Natural killer cell (primary cell): ENCODE measurements at regions of chr11 and their contacts with region 1.

Region 1: DNA sequence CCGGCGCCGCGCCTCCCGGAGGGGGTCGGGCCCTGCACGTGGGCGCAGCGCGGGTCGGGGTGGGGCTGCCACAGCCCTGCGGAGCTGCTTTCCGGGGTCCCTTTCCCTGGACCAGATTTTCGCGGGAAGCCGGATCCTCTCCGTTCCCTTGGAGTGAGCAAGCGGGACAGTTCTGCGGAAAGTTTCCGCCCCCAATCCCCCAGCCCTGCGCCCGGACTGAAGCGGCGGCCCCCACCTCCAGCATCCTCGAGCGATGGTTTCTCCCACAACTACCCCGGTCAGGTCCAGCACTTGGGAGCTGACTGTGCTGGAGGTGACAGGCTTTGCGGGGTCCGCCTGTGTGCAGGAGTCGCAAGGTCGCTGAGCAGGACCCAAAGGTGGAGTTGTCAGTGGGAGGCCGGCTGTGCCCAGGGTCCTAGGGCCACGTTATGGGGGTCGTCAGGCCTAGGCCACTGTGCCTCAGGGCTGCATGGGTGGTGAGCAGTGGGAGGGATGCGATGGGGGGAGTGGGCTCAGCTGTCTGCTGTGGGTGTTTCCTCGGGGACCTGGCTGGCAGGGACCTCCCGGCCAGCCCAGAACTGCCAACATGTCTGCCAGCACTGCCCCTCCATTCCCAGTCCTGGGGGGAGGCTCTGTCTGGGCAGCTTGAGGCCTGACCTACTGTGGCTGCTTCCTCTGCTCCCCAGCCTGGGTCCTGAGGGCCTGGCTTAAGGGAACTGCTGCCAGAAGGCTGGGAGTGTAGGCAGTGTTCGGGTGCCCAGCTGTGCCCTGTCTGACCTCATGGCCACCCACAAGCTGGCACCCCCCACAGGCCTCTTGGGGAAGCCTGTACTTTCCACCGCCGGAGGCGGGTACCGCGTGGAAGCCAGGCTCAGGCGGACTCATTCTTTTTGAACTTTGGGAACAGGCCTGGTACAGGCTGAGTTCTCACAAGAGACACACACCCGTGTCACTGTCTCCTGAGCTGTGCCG is 726 bp downstream of the ST3GAL4 start:
- DNase-seq: peak in 1 of 2 donors; percentile 37
- ATAC-seq: peak; percentile 11 to 36 (median 33)
- H3K4me3 ChIP-seq: peak overlapping the region; percentile 35
- H3K4me3 Mint-ChIP-seq: peak overlapping the region; percentile 79
- H3K27ac ChIP-seq: peak overlapping the region; percentile 37
- H3K27ac Mint-ChIP-seq: peak overlapping the region; percentile 67 to 80
- H3K4me1 ChIP-seq: peaks cover 58% of the 10 kb centered on the region
- H3K4me1 Mint-ChIP-seq: peaks cover 39 to 79% of the 10 kb centered on the region in 2 donors
- H3K27me3 ChIP-seq: no peaks in the 10 kb centered on the region
- H3K27me3 Mint-ChIP-seq: no peaks in the 10 kb centered on the region
- CTCF ChIP-seq: no peak

Region 2: DNA sequence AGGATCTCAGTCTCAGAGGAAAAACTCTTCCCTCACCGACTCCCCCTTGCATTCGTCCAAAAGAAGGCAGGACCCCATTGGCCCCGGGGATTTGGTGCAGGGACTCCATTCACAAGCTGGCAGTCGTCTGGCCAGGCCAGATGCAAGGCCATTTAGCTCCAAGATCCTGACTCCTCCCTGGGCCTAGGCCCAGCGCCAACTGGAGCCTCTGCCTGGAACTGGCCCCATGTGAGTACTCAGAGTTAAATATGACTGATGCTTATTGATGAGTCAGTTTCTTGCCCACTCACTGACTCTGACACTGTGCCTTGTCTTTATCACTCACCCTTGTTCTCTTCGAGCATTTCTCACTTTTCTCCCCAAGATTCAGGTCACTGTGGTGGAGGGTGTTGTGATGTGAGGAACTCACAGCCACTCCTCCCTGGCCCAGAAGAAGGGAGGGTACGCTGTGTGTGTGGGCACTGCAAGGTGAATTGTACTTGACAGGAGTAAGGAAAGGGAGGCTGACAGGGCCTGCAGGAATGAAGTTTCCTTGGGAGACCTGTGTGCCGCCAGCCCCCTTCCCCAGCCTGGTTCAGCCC is 24.0 kb before region 1 on chr11:
- intact Hi-C with region 1: loop called (anchors 2 kb)
- DNase-seq: peak; percentile 65
- ATAC-seq: peak; percentile 69 to 90 (median 80)
- H3K4me3 ChIP-seq: no peak overlapping the region
- H3K4me3 Mint-ChIP-seq: peak overlapping the region; percentile 80
- H3K27ac ChIP-seq: peak overlapping the region; percentile 85
- H3K27ac Mint-ChIP-seq: peak overlapping the region; percentile 88 to 97
- H3K4me1 ChIP-seq: peaks cover 90% of the 10 kb centered on the region
- H3K4me1 Mint-ChIP-seq: peaks cover 84 to 85% of the 10 kb centered on the region in 2 donors
- H3K27me3 ChIP-seq: no peaks in the 10 kb centered on the region
- H3K27me3 Mint-ChIP-seq: no peaks in the 10 kb centered on the region
- CTCF ChIP-seq: no peak